Uterus (tissue), 4 donors: ENCODE measurements at regions of chr1 and their contacts with region 1.

Region 1: DNA sequence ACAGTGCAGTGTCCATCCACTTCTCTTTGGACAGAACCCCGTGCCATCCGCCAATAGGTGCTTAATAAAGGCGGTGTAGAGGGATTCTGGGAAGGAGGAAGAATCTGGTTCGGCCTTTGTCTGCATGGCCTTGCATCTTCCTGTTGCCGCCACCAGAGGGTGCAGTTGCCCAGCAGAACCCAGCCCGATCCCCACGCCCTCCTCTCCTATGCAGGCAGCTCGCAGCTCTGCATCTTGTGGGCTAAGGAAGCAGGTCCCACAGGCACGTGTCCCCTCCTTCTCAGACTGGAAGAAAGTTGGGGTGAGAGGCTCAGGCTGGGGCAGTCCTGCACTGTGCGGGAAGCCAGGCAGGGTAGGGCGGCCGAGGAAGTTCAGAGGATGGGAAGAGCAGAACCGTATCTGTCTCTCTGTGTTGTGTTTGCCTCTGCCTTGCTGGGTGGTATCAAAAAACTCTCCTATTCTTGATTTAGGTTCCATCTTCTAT is 20.8 kb downstream of the NAV1 start:
- DNase-seq: peak; percentile 83 to 84
- H3K4me3 ChIP-seq: no peak overlapping the region
- H3K27ac ChIP-seq: peak overlapping the region in 1 of 2 donors; percentile 12
- H3K4me1 ChIP-seq: peaks cover 0 to 10% of the 10 kb centered on the region in 2 donors
- H3K27me3 ChIP-seq: no peaks in the 10 kb centered on the region
- CTCF ChIP-seq: peak; percentile 95 to 99 (median 98)
- POLR2A ChIP-seq: no peak

Region 2: GRCh38 chr1:201703621-201704439 is 144.1 kb after region 1 on chr1:
- intact Hi-C with region 1: loop called (anchors 2 kb)
- DNase-seq: peak; percentile 85 to 88
- H3K4me3 ChIP-seq: no peak overlapping the region
- H3K27ac ChIP-seq: peak overlapping the region; percentile 72 to 79
- H3K4me1 ChIP-seq: peaks cover 0 to 8% of the 10 kb centered on the region in 2 donors
- H3K27me3 ChIP-seq: no peaks in the 10 kb centered on the region
- CTCF ChIP-seq: peak; percentile 96 to 98 (median 98)
- POLR2A ChIP-seq: no peak